Mammary epithelial cell (primary cell): ENCODE measurements at regions of chr10 and their contacts with region 1.

Region 1: DNA sequence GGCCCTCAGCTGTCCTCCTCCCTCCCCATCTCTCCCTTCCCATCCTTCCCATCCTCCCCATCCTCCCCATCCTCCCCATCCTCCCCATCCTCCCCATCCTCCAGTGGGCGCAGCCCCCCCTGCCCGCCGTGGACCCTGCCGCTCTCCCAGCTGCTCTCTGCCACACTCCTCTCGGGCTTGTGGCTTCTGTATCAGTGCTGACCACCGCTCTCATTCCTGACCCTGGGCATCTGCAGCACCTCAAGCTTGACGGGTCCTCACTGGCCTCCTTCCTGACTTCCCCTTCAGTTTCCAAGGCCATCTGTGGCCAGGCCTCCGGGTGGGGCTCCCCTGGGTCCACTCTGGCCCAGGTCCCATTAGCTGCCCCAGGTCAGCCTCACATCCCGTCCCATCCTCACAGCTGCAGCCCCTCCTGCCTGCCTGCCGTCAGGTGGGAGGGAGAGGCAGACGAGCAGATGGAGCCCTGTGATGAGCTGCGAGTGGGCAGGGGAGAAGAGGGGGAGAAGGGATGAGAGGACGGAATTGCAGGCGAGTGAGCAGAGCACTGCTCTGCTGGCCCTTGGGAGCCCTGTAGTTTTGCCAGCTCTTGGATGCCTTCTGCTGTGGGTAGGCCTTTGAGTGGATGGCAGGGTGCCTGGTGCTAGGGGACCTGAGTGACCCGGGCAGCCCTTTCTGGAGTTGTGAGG is 35.7 kb downstream of the LHPP start:
- DNase-seq: no peak
- H3K4me3 ChIP-seq: no peak overlapping the region
- H3K27ac ChIP-seq: no peak overlapping the region
- H3K4me1 ChIP-seq: no peaks in the 10 kb centered on the region
- H3K27me3 ChIP-seq: no peaks in the 10 kb centered on the region
- CTCF ChIP-seq: no peak

Region 2: DNA sequence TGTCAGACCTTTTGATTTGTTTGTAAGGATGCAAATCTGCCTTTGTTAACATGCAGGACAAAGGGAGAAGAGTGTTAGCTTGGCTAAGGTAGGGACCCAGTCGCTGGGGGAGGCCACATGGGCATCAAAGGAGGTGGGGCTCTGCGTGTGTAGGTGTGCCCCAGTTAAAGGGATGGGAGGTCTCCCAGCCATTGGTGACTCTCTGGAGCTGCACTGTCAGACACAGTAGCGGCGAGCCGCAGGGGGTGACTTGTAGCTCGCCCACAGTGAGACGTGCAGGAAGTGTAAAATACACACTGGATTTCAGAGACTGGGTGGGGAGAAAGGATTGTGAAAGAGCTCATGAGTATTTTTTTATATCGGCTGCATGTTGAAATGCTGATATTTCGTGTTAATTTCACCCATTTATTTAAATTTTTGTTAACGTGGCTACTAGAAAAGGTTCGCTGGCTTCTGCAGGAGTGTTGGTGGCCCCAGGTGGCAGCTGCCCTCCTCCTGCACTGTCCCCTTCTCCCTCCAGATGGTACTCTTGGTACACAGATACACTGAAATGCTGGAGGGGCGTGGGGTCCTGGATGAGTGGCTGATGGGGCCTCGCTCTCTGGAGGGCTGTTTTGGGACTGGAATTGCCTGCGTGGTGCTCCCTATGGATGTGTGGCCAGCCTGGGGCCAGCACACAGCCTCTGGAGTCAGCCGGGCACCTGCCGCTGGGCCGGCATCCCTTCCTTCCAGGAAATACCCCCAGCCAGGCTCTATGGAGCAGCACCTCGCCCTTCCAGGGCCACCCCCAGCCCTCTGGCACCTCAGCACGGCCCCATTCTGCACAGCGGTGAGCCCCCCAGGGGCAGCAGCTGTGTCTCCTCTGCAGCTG is 23.5 kb after region 1 on chr10:
- CTCF ChIA-PET with region 1: no interaction called
- dilution Hi-C with region 1: no loop called
- in situ Hi-C with region 1: no loop called
- intact Hi-C with region 1: no loop called
- DNase-seq: no peak
- H3K4me3 ChIP-seq: no peak overlapping the region
- H3K27ac ChIP-seq: no peak overlapping the region
- H3K4me1 ChIP-seq: peaks cover 12% of the 10 kb centered on the region
- H3K27me3 ChIP-seq: no peaks in the 10 kb centered on the region
- CTCF ChIP-seq: no peak

Region 3: DNA sequence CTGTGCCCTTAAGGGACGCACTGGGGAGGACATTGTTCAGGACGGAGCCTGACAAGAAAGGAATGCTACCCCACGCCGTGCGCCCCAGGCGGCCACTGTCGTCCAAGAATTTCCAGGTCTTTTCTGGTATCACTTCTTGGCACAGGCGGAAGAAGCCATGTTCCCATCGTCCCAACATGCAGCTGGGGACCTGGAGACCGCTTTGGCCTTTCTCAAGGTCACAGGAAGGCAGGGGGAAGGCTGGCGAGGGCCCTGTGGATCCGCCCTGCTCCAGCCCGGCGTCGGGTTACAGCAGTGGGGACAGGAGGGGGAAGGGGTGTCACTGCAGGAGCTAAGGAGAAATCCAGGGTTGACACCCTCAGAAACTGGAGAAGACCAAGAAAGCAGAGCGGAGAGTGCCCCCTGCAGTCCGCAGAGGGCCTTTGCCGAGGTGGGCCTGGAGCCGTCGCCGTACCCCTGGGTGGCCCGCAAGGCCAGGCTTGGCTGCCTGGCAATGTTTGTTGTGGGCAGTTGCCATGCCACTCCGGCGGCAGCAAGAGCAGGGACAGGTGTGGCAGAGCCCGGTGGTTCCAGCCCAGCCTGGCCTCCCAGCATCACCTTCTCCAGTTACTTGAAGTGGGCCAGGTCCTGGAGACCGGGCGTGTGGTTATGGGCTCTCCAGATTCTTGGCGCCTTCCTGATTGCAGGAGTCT is 68.4 kb after region 1 on chr10:
- CTCF ChIA-PET with region 1: no interaction called
- dilution Hi-C with region 1: loop called (anchors 5 kb)
- in situ Hi-C with region 1: no loop called
- intact Hi-C with region 1: no loop called
- DNase-seq: no peak
- H3K4me3 ChIP-seq: no peak overlapping the region
- H3K27ac ChIP-seq: no peak overlapping the region
- H3K4me1 ChIP-seq: peaks cover 3% of the 10 kb centered on the region
- H3K27me3 ChIP-seq: no peaks in the 10 kb centered on the region
- CTCF ChIP-seq: peak; percentile 31 to 35